SK-N-SH (cell line): ENCODE measurements at regions of chr5 and their contacts with region 1.

Region 1: DNA sequence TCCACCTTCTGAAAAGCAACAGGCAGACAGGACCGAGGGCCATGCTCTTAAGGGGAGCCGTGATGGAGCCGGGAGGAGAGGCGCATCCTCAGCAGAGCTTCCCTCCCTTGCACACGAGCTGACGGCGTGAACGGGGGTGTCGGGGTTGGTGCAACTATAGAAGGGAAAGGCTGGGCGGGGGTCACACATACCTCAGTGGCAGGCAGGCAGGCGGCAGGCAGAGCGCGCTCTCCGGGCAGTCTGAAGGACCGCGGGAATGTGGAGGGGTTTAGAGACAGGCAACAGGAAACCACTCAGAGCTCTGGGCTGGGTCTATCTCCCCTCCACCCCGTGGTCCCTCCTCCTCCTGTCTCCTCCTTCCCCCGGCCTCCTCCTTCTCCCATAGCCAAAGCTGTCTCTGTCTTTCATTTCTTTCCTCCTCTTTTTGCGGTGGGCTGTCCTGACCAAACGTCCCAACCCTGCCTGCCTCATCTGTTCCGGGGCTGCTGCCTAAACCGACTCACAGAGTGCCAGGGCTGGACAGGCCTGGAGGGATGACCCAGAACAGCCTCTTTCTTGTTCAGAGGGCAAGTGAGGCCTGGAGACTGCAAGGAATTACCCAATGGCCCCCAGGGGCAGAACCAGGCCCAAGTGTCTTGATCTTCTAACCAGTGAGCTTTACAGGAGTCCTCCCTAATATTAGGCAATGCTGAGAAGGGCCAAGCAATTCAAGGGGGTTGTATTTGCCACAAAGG is at the start of gene SPARC:
- DNase-seq: peak; percentile 72
- H3K4me3 ChIP-seq: peak within 1 kb of the TSS; percentile 68 to 83
- H3K27ac ChIP-seq: peak within 1 kb of the TSS; percentile 85 to 97
- H3K4me1 ChIP-seq: peaks cover 21 to 38% of the 10 kb centered on the region in 2 experiments
- H3K27me3 ChIP-seq: no peaks in the 10 kb centered on the region
- CTCF ChIP-seq: no peak
- EP300 ChIP-seq: no peak; a peak in 1 of 4 replicates
- RAD21 ChIP-seq: 0 out of 2 replicates have a peak, but pooled peaks have one; percentile 1
- polyA plus RNA-seq, gene SPARC: 987 and 1,115 TPM in 2 replicates

Region 2: GRCh38 chr5:151675611-151676313 is 11.1 kb before region 1 on chr5:
- CTCF ChIA-PET with region 1: interaction called, 11 read pairs
- POLR2A ChIA-PET with region 1: no interaction called
- DNase-seq: no peak
- H3K4me3 ChIP-seq: no peak overlapping the region
- H3K27ac ChIP-seq: peak overlapping the region in 1 of 2 experiments; percentile 97; a peak in 3 of 4 replicates
- H3K4me1 ChIP-seq: peaks cover 16 to 78% of the 10 kb centered on the region in 2 experiments
- H3K27me3 ChIP-seq: no peaks in the 10 kb centered on the region
- CTCF ChIP-seq: no peak
- EP300 ChIP-seq: no peak
- RAD21 ChIP-seq: no peak